AG04450 (cell line): ENCODE measurements at regions of chr1 and their contacts with region 1.

Region 1: DNA sequence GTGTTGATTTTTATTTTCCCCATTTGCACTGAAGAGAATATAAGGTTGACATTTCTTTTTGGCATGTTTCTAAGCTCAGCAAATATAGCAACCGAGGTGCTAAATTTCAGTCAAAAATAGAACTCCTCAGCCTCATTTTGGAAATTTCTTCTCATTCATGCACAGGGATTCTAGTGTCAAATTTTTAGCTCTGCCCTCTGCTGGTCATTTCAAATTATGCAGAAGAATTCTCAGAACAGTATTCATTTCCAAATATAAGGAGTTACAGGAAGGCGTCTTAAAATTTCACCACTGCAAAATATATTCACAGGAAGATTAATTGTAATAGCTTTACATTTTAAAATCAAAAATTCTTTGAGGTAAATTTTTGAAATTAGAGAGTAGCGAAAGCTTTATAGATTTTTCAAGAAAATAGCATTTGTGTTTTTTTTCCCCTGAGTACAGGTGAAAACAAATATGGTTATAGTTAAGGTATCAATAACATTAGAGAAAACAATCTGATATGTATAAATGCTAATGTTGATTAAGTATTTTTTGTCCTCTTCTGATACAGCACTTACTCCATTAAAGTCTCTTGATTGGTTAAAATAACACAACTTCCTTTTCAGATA is 57.9 kb downstream of the FMN2 start:
- DNase-seq: no peak
- H3K4me3 ChIP-seq: no peak overlapping the region
- H3K27ac ChIP-seq: no peak overlapping the region
- H3K27me3 ChIP-seq: no peaks in the 10 kb centered on the region
- CTCF ChIP-seq: peak; percentile 72

Region 2: DNA sequence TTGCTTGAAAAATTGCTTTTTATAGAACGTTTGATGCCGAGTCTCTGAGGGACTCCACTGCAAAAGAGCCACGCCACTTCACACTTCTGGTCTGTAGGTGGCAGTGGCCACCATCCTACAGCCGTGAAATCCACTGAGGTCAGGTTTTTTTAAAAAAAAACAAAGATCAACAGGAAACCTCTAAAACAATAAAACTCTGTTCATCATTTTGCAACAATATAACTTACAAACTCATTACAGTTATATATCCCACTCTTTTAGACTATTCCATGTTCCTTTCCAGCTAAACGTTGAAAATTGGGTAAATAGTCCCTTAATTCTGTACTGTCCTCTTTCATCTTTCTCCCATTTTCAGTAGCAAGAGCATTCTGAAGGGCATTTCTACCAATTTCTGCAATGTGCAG is 122.5 kb before region 1 on chr1:
- CTCF ChIA-PET with region 1: interaction called, 175 read pairs
- POLR2A ChIA-PET with region 1: no interaction called
- DNase-seq: no peak
- H3K4me3 ChIP-seq: no peak overlapping the region
- H3K27ac ChIP-seq: no peak overlapping the region
- H3K27me3 ChIP-seq: no peaks in the 10 kb centered on the region
- CTCF ChIP-seq: peak; percentile 99

Region 3: DNA sequence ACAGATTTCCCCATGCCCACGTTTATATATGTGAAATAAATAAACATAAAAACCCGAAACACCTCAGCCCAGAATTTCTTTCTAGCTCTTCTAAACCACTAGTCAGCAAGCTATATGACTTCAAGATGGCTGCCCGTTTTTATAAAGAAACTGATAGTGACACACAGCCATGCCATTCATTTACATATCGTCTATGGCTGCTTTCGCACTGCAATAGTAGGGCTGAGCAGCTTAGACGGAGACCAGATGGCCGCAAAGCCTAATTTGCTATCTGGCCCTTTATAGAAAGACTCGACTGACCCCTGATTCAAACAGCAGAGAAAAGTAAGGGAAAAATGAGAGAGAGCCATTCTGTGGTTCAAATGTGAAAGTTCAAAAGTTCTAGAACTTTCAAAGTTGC is 103.6 kb before region 1 on chr1:
- CTCF ChIA-PET with region 1: interaction called, 10 read pairs
- POLR2A ChIA-PET with region 1: no interaction called
- DNase-seq: no peak
- H3K4me3 ChIP-seq: no peak overlapping the region
- H3K27ac ChIP-seq: no peak overlapping the region
- H3K27me3 ChIP-seq: no peaks in the 10 kb centered on the region
- CTCF ChIP-seq: no peak

Region 4: GRCh38 chr1:240107058-240107684 is 42.4 kb before region 1 on chr1:
- CTCF ChIA-PET with region 1: interaction called, 12 read pairs
- POLR2A ChIA-PET with region 1: no interaction called
- DNase-seq: peak; percentile 37
- H3K4me3 ChIP-seq: no peak overlapping the region
- H3K27ac ChIP-seq: no peak overlapping the region
- H3K27me3 ChIP-seq: no peaks in the 10 kb centered on the region
- CTCF ChIP-seq: no peak

Region 5: DNA sequence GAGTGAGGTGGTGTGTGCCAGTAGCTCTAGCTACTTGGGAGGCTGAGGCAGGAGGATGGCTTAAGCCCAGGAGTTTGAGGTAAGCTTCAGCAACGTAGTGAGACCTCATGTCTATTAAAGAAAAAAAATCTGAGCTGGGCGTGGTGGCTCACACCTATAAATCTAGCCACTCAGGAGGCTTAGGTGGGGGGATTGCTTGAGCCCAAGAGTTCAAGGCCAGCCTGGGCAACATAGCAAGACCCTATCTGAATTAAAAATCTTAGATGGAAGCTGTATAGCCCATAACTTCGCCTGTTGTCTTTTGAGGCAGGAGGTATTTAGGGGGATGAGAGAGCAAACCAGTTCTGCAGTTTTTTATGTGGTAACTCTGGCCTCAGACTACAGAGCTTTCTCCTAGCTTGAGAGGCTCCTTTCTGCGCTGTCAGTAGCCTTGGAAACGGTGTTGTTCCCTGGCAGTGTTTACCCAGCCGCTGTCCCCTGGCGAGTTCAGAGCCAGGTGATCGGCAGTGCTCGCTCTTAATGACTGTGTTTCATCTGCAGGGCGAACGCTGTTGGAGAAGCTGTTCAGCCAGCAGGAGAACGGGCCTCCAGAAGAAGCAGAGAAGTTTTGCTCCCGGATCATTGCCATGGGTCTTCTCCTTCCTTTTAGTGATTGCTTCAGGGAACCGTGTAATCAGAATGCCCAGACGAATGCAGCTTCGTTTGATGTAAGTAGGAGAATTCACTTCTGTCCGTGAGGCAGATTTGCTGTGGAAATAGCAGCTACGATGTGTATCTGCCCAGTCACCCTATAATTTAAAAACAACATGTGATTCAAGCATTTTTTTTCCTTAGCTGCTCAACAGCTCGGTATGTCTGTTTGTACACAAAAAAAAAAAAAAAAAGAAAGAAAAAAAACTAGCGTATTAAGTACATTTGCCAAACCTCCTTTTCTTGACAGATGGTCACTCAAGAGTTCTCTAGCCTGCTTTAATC is 26.7 kb before region 1 on chr1:
- CTCF ChIA-PET with region 1: interaction called, 42 read pairs
- POLR2A ChIA-PET with region 1: no interaction called
- DNase-seq: no peak
- H3K4me3 ChIP-seq: no peak overlapping the region
- H3K27ac ChIP-seq: no peak overlapping the region
- H3K27me3 ChIP-seq: no peaks in the 10 kb centered on the region
- CTCF ChIP-seq: no peak

Region 6: DNA sequence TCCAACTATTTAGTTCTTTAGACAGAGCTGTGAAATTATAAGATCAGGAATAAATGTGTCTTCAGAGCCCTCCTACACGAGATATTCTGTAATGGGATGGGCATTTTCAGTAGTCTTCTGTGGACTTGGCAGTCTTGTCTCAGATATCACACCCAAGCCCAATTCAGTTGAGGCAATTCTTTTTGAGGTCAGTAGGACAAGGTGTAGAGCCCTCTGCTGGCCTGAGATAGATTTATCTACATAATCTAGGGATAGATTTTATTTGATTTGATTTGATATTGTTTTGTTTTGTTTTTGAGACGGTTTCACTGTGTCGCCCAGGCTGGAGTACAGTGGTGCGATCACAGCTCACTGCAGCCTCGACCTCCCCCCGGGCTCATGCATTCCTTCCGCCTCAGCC is 19.6 kb after region 1 on chr1:
- CTCF ChIA-PET with region 1: interaction called, 112 read pairs
- POLR2A ChIA-PET with region 1: no interaction called
- DNase-seq: no peak
- H3K4me3 ChIP-seq: no peak overlapping the region
- H3K27ac ChIP-seq: no peak overlapping the region
- H3K27me3 ChIP-seq: no peaks in the 10 kb centered on the region
- CTCF ChIP-seq: peak; percentile 40

Region 7: DNA sequence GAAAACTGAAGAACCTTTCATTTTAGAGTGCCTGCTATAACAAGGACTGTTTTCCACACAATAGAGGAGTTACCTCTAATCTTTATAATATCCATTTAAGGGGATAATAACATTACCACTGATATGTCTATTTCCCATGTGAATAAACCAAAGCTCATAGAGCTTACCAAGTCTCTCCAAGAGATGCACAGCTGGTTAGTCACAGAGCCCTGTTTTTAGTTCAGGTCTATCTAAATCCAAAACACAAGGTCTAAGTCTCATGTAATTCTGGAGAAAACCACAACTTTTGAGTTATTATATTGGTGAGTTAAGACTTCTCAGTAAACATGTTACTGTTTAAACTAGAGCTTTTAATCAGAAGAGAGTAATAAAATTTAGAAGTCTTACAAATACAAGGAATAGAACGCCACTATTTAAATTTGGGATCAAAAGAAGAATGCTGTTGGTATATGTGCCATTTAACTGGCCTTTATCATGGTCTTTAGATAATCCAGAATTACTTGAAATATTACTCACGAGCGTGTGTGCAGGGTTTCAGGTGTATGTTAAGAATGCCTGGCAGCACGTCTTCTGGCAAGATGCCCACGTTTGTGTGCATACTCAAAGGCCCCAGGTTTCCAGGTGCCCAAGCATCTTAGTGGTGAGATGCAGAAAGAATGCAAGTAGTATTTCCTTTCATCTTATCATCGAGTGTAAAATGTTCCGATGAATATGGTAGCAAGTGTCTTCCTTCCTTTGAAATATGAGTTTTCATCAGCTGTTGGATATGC is 132.7 kb after region 1 on chr1:
- CTCF ChIA-PET with region 1: no interaction called
- POLR2A ChIA-PET with region 1: no interaction called
- DNase-seq: no peak
- H3K4me3 ChIP-seq: no peak overlapping the region
- H3K27ac ChIP-seq: no peak overlapping the region
- H3K27me3 ChIP-seq: no peaks in the 10 kb centered on the region
- CTCF ChIP-seq: no peak

Region 8: DNA sequence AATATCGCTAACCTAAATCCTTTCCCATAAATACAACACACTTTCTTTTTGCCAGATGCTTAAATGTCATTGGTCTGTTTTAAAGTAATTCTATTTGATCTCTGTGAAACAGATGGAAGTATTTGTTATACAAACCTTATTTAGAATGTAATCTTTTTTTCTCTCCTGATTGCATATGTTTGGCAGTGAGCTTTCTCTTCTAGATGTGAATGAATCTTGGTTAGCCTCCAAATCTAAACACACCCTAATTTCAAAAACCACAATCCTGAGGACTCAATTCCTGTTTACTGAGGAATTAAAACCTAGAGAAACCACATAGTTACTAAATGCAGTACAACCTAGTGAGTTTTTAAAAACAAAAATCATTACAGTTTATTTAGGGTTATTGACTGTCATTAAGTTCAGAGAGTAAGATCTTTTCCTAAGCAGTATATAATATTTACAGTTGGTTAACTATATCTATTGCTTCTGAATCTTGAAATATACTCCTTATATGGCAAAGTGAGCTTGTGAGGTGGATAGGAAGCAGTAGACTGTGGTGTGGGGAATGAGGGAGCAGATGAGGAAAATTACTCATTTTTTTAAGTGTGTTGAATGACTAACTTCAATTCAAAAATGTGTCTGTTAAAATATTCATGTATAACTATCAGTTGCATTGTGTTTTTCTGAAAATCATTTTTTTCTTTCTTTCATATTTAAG is 160.8 kb after region 1 on chr1:
- CTCF ChIA-PET with region 1: no interaction called
- POLR2A ChIA-PET with region 1: no interaction called
- DNase-seq: peak; percentile 68
- H3K4me3 ChIP-seq: no peak overlapping the region
- H3K27ac ChIP-seq: no peak overlapping the region
- H3K27me3 ChIP-seq: no peaks in the 10 kb centered on the region
- CTCF ChIP-seq: no peak

Region 9: GRCh38 chr1:240350910-240351331 is 201.3 kb after region 1 on chr1:
- CTCF ChIA-PET with region 1: no interaction called
- POLR2A ChIA-PET with region 1: no interaction called
- DNase-seq: peak; percentile 68
- H3K4me3 ChIP-seq: no peak overlapping the region
- H3K27ac ChIP-seq: peak overlapping the region; percentile 40
- H3K27me3 ChIP-seq: no peaks in the 10 kb centered on the region
- CTCF ChIP-seq: no peak

Region 10: GRCh38 chr1:240691521-240692338 is 542.1 kb after region 1 on chr1:
- CTCF ChIA-PET with region 1: interaction called, 24 read pairs
- POLR2A ChIA-PET with region 1: no interaction called
- DNase-seq: no peak
- H3K4me3 ChIP-seq: no peak overlapping the region
- H3K27ac ChIP-seq: no peak overlapping the region
- H3K27me3 ChIP-seq: no peaks in the 10 kb centered on the region
- CTCF ChIP-seq: peak; percentile 98